CD4-positive, alpha-beta memory T cell (primary cell): ENCODE measurements at regions of chr6 and their contacts with region 1.

Region 1: DNA sequence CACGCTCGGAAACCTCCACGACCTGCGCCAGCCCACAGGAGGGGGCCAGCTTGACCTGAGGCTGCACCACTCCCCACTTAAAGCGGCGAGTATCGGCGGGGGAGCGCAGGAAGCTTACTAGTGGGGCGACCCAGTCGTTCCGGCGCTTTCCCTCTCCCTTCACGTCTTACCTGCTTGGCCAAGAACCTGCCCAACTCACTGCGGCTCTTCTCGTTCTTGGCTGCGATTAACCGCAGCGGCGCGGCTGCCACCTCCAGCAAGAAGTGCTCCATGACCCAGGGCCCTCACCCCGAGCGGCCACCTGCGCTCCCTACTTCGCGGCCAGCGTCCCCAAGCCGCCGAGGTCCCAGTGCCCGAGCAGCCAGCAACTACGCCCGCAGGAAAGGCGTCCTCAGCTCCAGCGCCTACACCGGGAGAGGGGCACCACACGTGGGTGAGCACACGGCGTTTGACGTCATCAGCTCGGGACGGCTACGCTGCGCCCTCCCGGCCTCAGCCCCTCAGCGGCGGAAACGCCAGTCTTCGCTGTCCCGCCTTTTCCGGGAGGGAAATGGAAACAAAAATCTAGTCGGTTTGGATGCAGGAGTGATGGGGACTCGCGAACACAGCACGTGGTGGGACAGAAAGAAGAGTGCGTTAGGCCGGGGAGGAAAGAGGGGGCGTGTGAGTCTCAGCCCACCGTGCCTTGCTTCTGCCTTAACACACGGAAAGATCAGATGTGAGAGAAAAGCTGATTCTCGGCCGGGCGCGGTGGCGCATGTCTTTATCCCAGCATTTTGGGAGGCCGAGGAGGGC is at the start of gene MDN1:
- DNase-seq: peak; percentile 87 to 91 (median 89)
- H3K4me3 ChIP-seq: peak within 1 kb of the TSS; percentile 97
- H3K4me3 Mint-ChIP-seq: peak within 1 kb of the TSS; percentile 92 to 100 (median 96)
- H3K27ac ChIP-seq: peak within 1 kb of the TSS; percentile 62
- H3K27ac Mint-ChIP-seq: peak within 1 kb of the TSS; percentile 91 to 100 (median 96)
- H3K4me1 ChIP-seq: peaks cover 34% of the 10 kb centered on the region
- H3K4me1 Mint-ChIP-seq: peaks cover 21 to 44% (median 31%) of the 10 kb centered on the region in 4 donors
- H3K27me3 ChIP-seq: no peaks in the 10 kb centered on the region
- H3K27me3 Mint-ChIP-seq: no peaks in the 10 kb centered on the region
- total RNA-seq, gene MDN1: 62.0 to 72.2 TPM

Region 2: GRCh38 chr6:89807581-89807980 is 12.0 kb before region 1 on chr6:
- CTCF ChIA-PET with region 1: interaction called, 3 read pairs
- POLR2A ChIA-PET with region 1: interaction called, 13 read pairs
- intact Hi-C with region 1: no loop called
- DNase-seq: no peak
- H3K4me3 ChIP-seq: no peak overlapping the region
- H3K4me3 Mint-ChIP-seq: no peak overlapping the region
- H3K27ac ChIP-seq: no peak overlapping the region
- H3K27ac Mint-ChIP-seq: peak overlapping the region in 5 of 7 donors; percentile 52 to 66 (median 63)
- H3K4me1 ChIP-seq: no peaks in the 10 kb centered on the region
- H3K4me1 Mint-ChIP-seq: peaks cover 16 to 32% (median 24%) of the 10 kb centered on the region in 4 donors
- H3K27me3 ChIP-seq: no peaks in the 10 kb centered on the region
- H3K27me3 Mint-ChIP-seq: no peaks in the 10 kb centered on the region

Region 3: DNA sequence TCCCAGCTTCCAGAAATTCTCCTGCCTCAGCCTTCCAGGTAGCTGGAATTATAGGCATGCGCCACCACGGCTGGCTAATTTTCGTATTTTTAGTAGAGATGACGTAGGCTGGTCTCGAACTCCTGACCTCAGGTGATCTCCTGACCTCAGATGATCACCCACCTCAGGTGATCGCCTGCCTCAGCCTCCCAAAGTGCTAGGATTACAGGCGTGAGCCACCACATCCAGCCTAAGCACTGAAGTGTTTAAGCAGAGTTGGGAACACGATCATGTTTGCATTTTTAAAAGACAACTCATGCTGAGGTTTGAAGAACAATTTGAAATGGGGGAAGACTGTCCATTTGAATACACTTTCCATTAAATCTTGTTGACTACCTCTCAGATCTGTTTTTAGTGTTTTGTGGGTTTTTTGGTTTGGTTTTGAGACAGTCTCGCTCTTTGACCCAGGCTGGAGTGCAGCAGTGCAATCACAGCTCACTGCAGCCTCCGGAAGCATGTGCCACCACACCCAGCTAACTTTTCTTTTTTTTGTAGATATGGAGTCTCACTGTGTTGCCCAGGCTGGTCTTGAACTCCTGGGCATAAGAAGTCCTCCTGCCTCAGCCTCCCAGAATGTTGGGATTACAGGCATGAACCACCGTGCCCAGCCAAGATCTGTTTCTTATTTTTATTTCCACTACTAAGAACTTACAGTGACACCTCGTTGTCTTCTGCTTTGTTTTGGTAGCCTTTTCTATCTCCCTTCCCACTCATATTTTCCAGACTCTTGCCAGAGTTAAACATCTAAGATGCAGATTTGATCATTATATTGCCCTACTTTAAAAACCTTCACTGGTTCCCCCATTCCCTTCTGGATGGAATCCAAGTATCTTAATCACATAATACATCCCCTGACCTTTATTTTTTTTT is 15.6 kb after region 1 on chr6:
- CTCF ChIA-PET with region 1: interaction called, 8 read pairs
- POLR2A ChIA-PET with region 1: interaction called, 147 read pairs
- intact Hi-C with region 1: loop called (anchors 1 kb)
- DNase-seq: peak; percentile 50 to 60 (median 56)
- H3K4me3 ChIP-seq: peak overlapping the region in 1 of 2 donors; percentile 10
- H3K4me3 Mint-ChIP-seq: peak overlapping the region; percentile 77 to 84 (median 82)
- H3K27ac ChIP-seq: peak overlapping the region; percentile 44
- H3K27ac Mint-ChIP-seq: peak overlapping the region; percentile 89 to 96 (median 91)
- H3K4me1 ChIP-seq: peaks cover 61% of the 10 kb centered on the region
- H3K4me1 Mint-ChIP-seq: peaks cover 41 to 78% (median 62%) of the 10 kb centered on the region in 4 donors
- H3K27me3 ChIP-seq: no peaks in the 10 kb centered on the region
- H3K27me3 Mint-ChIP-seq: no peaks in the 10 kb centered on the region

Region 4: DNA sequence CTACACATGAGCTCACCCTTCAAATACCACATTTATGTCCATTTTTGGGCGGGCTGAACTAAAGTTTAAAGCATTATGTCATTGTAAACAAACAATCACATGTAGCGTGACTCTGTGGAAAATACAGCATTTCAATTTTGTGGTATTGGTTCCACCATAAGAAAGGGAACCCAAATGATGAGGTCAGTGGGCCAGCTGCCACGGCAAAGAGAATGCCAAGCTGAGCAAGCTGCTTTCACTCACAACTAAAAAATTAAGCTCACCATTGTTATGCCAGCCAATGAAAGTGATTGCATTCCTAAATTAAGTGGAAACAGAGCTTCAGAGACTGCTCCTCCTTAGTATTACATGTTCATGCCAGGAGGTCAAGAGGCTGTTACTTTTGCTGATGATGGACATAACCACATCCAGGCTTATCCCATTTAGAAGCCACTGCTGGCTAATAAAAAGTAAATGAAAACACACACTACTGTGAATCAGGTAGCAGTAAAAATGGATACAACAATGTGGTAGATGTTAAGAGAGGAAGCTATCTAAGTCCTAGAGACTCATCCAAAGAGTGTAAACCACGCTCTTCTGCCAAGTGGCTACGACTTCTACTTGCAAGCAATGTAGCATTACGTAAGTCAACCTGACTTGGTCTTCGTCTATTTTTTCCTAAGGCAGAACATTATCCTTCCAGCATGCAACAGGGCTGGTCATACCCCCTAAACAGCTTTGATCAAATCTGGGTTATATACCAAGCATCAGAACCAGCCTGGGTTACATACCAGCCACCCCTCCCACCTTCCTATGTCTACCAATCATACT is 312.3 kb after region 1 on chr6:
- CTCF ChIA-PET with region 1: no interaction called
- POLR2A ChIA-PET with region 1: no interaction called
- intact Hi-C with region 1: no loop called
- DNase-seq: no peak
- H3K4me3 ChIP-seq: no peak overlapping the region
- H3K4me3 Mint-ChIP-seq: no peak overlapping the region
- H3K27ac ChIP-seq: no peak overlapping the region
- H3K27ac Mint-ChIP-seq: peak overlapping the region in 1 of 7 donors; percentile 10
- H3K4me1 ChIP-seq: no peaks in the 10 kb centered on the region
- H3K4me1 Mint-ChIP-seq: peaks cover 7 to 24% (median 16%) of the 10 kb centered on the region in 4 donors
- H3K27me3 ChIP-seq: no peaks in the 10 kb centered on the region
- H3K27me3 Mint-ChIP-seq: no peaks in the 10 kb centered on the region

Region 5: GRCh38 chr6:90296346-90297114 is 477.0 kb after region 1 on chr6 and contains the start of gene BACH2:
- CTCF ChIA-PET with region 1: no interaction called
- POLR2A ChIA-PET with region 1: interaction called, 3 read pairs
- intact Hi-C with region 1: loop called (anchors 10 kb)
- DNase-seq: peak; percentile 90 to 96 (median 92)
- H3K4me3 ChIP-seq: peak within 1 kb of the TSS; percentile 43 to 81
- H3K4me3 Mint-ChIP-seq: peak within 1 kb of the TSS; percentile 90 to 96 (median 93)
- H3K27ac ChIP-seq: peak within 1 kb of the TSS; percentile 65
- H3K27ac Mint-ChIP-seq: peak within 1 kb of the TSS; percentile 92 to 99 (median 97)
- H3K4me1 ChIP-seq: peaks cover 40% of the 10 kb centered on the region
- H3K4me1 Mint-ChIP-seq: peaks cover 14 to 40% (median 24%) of the 10 kb centered on the region in 4 donors
- H3K27me3 ChIP-seq: no peaks in the 10 kb centered on the region
- H3K27me3 Mint-ChIP-seq: peaks cover 0 to 4% of the 10 kb centered on the region in 2 donors
- total RNA-seq, gene BACH2: 44.4 to 48.0 TPM